HCT116 (cell line): ENCODE measurements at regions of chr18 and their contacts with region 1.

Region 1: GRCh38 chr18:21335927-21336488 is 94.0 kb downstream of the GREB1L start:
- DNase-seq: no peak
- ATAC-seq: no peak
- H3K4me3 ChIP-seq: no peak overlapping the region
- H3K27ac ChIP-seq: no peak overlapping the region
- H3K4me1 ChIP-seq: peaks cover 2 to 15% of the 10 kb centered on the region in 2 experiments
- H3K27me3 ChIP-seq: no peaks in the 10 kb centered on the region
- CTCF ChIP-seq: no peak
- POLR2A ChIP-seq: no peak
- RAD21 ChIP-seq: no peak

Region 2: DNA sequence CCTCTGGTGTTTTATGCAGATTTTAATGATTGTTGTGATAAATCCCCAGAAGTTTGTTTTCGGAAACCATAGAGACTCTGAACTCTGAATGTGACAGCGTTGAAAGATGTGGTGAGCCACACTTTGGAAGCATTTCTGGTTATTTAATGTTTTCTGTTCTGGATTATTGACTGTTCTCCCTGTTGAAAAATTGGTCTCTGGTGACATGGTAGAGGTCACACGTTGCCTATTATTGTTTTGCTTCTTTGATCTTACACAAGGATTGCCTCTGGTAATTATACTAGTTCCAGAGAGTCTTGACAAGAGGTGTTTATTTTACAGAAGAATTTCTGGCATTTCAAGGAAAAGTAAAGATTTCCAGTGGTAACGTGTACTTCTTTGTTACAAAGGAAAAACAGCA is 33.1 kb after region 1 on chr18:
- CTCF ChIA-PET with region 1: no interaction called
- POLR2A ChIA-PET with region 1: no interaction called
- RAD21 ChIA-PET with region 1: no interaction called
- intact Hi-C with region 1: loop called (anchors 5 kb)
- DNase-seq: no peak
- ATAC-seq: no peak
- H3K4me3 ChIP-seq: no peak overlapping the region
- H3K27ac ChIP-seq: no peak overlapping the region
- H3K4me1 ChIP-seq: 0 out of 4 replicates have a peak, but pooled peaks cover 0 to 7% of the 10 kb centered on the region in 2 experiments
- H3K27me3 ChIP-seq: no peaks in the 10 kb centered on the region
- CTCF ChIP-seq: no peak
- POLR2A ChIP-seq: no peak
- RAD21 ChIP-seq: no peak